MCF 10A (cell line): ENCODE measurements at regions of chr7 and their contacts with region 1.

Region 1: GRCh38 chr7:50206453-50207250 is 97.9 kb upstream of the IKZF1 start:
- DNase-seq: no peak
- H3K4me3 Mint-ChIP-seq: no peak overlapping the region
- H3K27ac Mint-ChIP-seq: no peak overlapping the region
- H3K4me1 Mint-ChIP-seq: no peaks in the 10 kb centered on the region
- H3K27me3 Mint-ChIP-seq: peaks cover 56% of the 10 kb centered on the region
- CTCF ChIP-seq: no peak

Region 2: GRCh38 chr7:50185951-50186682 is 20.5 kb before region 1 on chr7:
- CTCF ChIA-PET with region 1: interaction called, 27 read pairs
- POLR2A ChIA-PET with region 1: no interaction called
- intact Hi-C with region 1: no loop called
- DNase-seq: no peak
- H3K4me3 Mint-ChIP-seq: no peak overlapping the region
- H3K27ac Mint-ChIP-seq: no peak overlapping the region
- H3K4me1 Mint-ChIP-seq: no peaks in the 10 kb centered on the region
- H3K27me3 Mint-ChIP-seq: peaks cover 36% of the 10 kb centered on the region
- CTCF ChIP-seq: no peak

Region 3: DNA sequence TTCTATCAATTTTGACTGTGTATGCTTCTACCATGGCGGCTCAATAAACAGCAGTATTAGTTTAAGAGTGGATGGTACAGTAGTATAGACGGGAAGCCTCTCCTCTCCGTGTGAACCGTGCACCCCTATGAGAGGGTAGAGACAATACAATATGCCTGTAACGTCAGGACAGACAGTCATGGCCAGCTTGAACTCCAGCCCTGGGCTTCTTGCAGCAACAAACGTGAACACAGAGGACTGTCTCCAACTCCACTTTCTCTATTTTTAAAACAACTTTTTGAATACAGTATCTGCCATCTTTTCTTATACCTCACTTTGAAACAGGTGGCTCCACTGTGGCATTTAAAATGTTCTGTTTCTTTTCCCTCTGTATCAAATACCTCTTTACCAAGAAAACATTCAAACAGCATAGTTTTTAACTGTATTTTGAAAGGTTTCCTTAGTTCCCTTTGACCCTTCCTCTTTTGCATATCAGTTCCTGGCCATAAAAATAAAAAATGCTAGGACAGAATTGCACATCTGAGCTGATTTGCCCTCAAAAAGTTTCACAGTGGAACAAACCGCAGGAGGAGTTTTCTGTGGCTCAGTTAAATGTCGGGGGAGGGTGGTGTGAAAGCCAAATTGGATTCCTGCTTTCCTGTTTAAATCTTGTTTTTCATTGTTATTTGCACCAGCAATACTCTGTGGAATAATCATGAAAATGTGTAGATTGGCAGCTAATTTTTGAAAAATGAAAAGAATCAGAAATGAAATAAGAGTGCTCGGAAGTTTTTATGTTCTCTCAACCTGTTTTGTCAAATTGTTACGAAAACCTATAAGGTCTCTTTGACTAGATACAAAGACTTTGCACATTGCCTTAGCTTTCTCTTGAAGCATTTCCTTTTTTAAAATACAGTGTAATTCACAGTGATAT is 105.9 kb after region 1 on chr7:
- CTCF ChIA-PET with region 1: no interaction called
- POLR2A ChIA-PET with region 1: no interaction called
- intact Hi-C with region 1: no loop called
- DNase-seq: no peak
- H3K4me3 Mint-ChIP-seq: no peak overlapping the region
- H3K27ac Mint-ChIP-seq: no peak overlapping the region
- H3K4me1 Mint-ChIP-seq: no peaks in the 10 kb centered on the region
- H3K27me3 Mint-ChIP-seq: peaks cover 43% of the 10 kb centered on the region
- CTCF ChIP-seq: no peak

Region 4: DNA sequence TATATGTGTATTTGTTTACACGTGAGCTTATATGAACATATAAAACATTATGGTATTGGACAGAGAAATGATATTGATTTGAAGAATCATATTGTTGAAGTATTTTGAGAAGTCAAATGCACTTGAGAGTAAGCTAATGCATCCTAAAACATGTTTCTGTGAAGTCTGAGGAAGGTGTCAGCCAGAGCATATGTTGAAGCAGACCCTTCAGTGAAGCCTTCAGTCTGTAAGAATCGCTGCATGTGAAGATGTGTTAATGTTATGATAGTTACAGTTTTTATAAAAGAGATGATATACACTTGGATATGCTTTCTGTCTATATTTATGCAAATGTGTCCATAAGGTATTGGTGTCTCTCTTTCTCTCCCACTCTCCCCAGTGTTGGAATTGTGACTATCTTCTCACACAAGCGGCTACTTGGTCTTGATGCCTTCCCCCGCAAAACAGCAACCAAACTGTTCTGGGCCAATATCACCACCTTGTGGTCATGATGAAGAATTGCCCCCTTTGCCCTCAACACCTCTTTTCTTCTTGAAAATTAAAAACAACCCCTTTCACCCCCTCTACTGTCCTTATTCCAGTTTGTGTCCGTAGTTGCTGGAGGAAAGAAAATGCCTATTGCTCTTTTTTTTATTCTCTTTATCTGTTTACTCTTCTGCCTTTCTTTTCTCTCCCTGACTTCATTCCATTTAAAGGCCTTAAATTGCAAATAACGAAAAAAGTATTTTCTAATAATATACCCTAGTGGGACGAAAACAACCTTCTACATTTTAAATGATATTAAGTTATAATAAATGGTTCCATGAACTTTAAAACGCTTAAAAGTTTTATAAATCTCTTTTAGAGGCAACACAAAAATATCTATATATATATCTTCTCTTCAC is 162.7 kb after region 1 on chr7:
- CTCF ChIA-PET with region 1: interaction called, 6 read pairs
- POLR2A ChIA-PET with region 1: no interaction called
- intact Hi-C with region 1: loop called (anchors 1 kb)
- DNase-seq: peak; percentile 43
- H3K4me3 Mint-ChIP-seq: no peak overlapping the region
- H3K27ac Mint-ChIP-seq: no peak overlapping the region
- H3K4me1 Mint-ChIP-seq: no peaks in the 10 kb centered on the region
- H3K27me3 Mint-ChIP-seq: peaks cover 51% of the 10 kb centered on the region
- CTCF ChIP-seq: peak; percentile 48

Region 5: GRCh38 chr7:50426280-50427045 is 219.8 kb after region 1 on chr7:
- CTCF ChIA-PET with region 1: interaction called, 214 read pairs
- POLR2A ChIA-PET with region 1: no interaction called
- intact Hi-C with region 1: no loop called
- DNase-seq: no peak
- H3K4me3 Mint-ChIP-seq: no peak overlapping the region
- H3K27ac Mint-ChIP-seq: no peak overlapping the region
- H3K4me1 Mint-ChIP-seq: no peaks in the 10 kb centered on the region
- H3K27me3 Mint-ChIP-seq: no peaks in the 10 kb centered on the region
- CTCF ChIP-seq: no peak

Region 6: DNA sequence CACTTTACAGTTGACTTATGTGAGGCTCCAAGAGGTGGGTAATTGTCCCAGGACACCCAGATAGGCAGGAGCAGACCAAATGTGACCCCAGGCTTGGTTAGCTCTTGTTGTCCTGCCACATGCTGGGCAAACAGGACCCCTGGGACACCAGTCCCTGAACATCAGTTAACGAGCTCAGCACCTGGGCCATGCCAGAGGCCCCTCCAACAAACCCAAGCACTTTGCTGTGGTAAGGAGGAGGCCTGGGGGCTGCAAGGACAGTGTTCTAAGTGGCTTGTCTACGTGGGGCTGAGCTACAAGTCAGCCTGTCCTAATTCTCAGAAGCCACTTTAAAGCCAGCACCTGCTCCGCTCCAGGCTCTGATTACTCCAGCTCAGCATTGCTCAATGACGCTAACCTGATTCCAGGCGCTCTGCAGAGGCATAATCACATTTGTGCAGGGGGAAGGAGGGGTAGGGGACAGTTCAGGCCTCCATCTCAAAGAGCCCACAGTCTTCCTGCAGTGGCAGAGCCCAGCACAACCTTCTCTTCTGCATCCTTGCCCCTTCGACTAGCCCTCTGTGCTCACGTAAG is 301.3 kb after region 1 on chr7:
- CTCF ChIA-PET with region 1: no interaction called
- POLR2A ChIA-PET with region 1: no interaction called
- intact Hi-C with region 1: no loop called
- DNase-seq: no peak
- H3K4me3 Mint-ChIP-seq: no peak overlapping the region
- H3K27ac Mint-ChIP-seq: no peak overlapping the region
- H3K4me1 Mint-ChIP-seq: peaks cover 28% of the 10 kb centered on the region
- H3K27me3 Mint-ChIP-seq: no peaks in the 10 kb centered on the region
- CTCF ChIP-seq: no peak

Region 7: GRCh38 chr7:50872437-50872836 is 665.8 kb after region 1 on chr7:
- CTCF ChIA-PET with region 1: no interaction called
- POLR2A ChIA-PET with region 1: no interaction called
- intact Hi-C with region 1: no loop called
- DNase-seq: no peak
- H3K4me3 Mint-ChIP-seq: no peak overlapping the region
- H3K27ac Mint-ChIP-seq: no peak overlapping the region
- H3K4me1 Mint-ChIP-seq: peaks cover 8% of the 10 kb centered on the region
- H3K27me3 Mint-ChIP-seq: peaks cover 27% of the 10 kb centered on the region
- CTCF ChIP-seq: no peak